ENCODE measurements at regions of chr3 and their contacts with region 1.

Region 1: GRCh38 chr3:158727206-158728060 is 4.8 kb downstream of the RARRES1 start:
- DNase-seq: peak; percentile 54 to 74
- H3K4me3 ChIP-seq: peak overlapping the region; percentile 30; the same call in 1 of the 2 replicates
- H3K27ac ChIP-seq: peak overlapping the region; percentile 78
- H3K4me1 ChIP-seq: peaks cover 80% of the 10 kb centered on the region
- H3K27me3 ChIP-seq: no peaks in the 10 kb centered on the region
- CTCF ChIP-seq: peak; percentile 94

Region 2: GRCh38 chr3:157520485-157521150 is 1206.8 kb before region 1 on chr3:
- CTCF ChIA-PET with region 1: no interaction called
- POLR2A ChIA-PET with region 1: no interaction called
- intact Hi-C with region 1: no loop called
- DNase-seq: no peak
- H3K4me3 ChIP-seq: no peak overlapping the region
- H3K27ac ChIP-seq: no peak overlapping the region
- H3K4me1 ChIP-seq: no peaks in the 10 kb centered on the region
- H3K27me3 ChIP-seq: no peaks in the 10 kb centered on the region
- CTCF ChIP-seq: no peak

Region 3: GRCh38 chr3:158570999-158571974 is 156.1 kb before region 1 on chr3 and contains the start of gene MLF1:
- CTCF ChIA-PET with region 1: no interaction called
- POLR2A ChIA-PET with region 1: interaction called, 3 read pairs
- intact Hi-C with region 1: loop called (anchors 5 kb)
- DNase-seq: peak; percentile 90 to 98
- H3K4me3 ChIP-seq: peak within 1 kb of the TSS; percentile 94
- H3K27ac ChIP-seq: peak within 1 kb of the TSS; percentile 52
- H3K4me1 ChIP-seq: peaks cover 5% of the 10 kb centered on the region; the same call in 1 of the 2 replicates
- H3K27me3 ChIP-seq: no peaks in the 10 kb centered on the region
- CTCF ChIP-seq: no peak
- total RNA-seq, gene MLF1: 52.3 and 55.5 TPM in 2 replicates

Region 4: DNA sequence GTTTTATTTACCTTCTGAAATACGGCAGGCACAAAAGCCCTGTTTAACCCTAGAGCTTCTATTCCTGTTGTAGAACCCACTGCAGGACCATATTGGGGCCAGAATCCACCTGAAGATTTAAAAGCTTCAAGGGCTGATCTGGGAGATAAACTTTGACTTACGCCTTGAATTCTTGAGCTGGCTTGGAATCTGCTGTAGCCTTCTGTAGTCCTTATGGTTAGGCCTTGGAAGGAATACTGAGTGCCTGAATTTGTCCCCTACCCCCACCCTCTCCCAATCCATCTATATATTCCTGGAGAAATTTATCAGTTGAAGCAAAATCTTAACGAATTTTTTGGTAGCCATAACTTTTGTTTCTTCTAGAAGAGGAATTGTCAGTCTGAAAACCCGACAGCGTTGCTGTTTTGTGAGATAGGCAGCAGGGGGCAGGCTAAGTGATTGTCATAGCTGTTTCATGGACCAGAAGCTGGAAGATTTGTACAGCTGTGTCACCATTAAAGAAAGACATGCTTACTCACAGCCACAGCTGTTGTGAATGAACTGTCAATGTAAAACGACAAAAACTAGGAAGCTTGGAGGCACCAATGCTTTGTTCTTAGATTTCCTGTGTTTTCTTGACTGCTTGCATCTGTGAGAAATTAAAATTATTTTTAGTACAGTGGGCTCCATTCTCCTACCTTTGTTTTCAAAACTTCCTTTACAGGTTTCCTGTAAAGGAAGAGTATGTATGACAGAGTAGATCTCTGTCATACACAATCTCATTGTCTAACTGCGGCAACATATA is 67.8 kb before region 1 on chr3:
- CTCF ChIA-PET with region 1: interaction called, 12 read pairs
- POLR2A ChIA-PET with region 1: no interaction called
- intact Hi-C with region 1: loop called (anchors 1 kb)
- DNase-seq: peak; percentile 39 to 57
- H3K4me3 ChIP-seq: no peak overlapping the region
- H3K27ac ChIP-seq: peak overlapping the region; percentile 11; the same call in 1 of the 2 replicates
- H3K4me1 ChIP-seq: no peaks in the 10 kb centered on the region
- H3K27me3 ChIP-seq: no peaks in the 10 kb centered on the region
- CTCF ChIP-seq: peak; percentile 85

Region 5: DNA sequence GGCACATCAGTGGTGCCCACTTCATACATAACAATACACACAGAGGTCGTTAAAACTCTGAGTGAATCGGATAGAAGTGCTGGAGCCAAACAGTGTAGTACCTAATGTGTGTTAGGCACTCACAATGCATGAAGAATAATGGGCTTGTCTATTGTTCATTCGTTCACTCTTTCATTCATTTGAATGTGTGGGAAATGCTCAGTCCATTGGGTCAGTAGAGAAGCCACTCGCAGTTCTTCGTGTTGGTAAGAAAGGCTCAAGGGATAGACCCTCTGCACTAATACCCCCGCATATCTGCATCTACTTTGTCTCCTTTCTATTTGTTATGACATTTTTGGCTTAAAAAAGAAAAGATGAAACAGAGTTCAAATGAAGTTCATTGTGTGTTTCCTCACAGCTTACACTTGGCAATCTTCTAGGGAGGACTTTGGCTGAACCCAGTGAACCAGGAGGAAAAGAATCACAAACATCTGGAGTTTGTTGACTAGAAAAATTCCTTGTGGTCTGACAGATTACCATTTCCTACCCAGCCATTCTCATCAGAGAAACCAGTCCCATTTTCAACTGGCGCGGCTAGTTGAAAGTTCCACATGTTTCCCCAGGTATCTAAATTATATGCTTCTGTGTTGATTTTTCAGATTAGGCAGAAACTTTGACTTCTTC is 41.6 kb after region 1 on chr3:
- CTCF ChIA-PET with region 1: interaction called, 4 read pairs
- POLR2A ChIA-PET with region 1: interaction called, 3 read pairs
- intact Hi-C with region 1: loop called (anchors 1 kb)
- DNase-seq: peak; percentile 46 to 96
- H3K4me3 ChIP-seq: peak overlapping the region; percentile 6; the same call in 1 of the 2 replicates
- H3K27ac ChIP-seq: peak overlapping the region; percentile 98
- H3K4me1 ChIP-seq: peaks cover 100% of the 10 kb centered on the region
- H3K27me3 ChIP-seq: no peaks in the 10 kb centered on the region
- CTCF ChIP-seq: no peak

Measured in PC-9 (cell line).